Left lung (tissue), 14 donors: ENCODE measurements at regions of chr5 and their contacts with region 1.

Region 1: GRCh38 chr5:36944607-36945225 is 68.1 kb downstream of the NIPBL start:
- DNase-seq: peak in 2 of 4 donors; percentile 38 to 51
- ATAC-seq: peak; percentile 29
- H3K4me3 ChIP-seq: no peak overlapping the region
- H3K27ac ChIP-seq: no peak overlapping the region
- H3K4me1 ChIP-seq: peaks cover 7 to 48% of the 10 kb centered on the region in 2 donors
- H3K27me3 ChIP-seq: no peaks in the 10 kb centered on the region
- CTCF ChIP-seq: peak; percentile 54 to 60

Region 2: DNA sequence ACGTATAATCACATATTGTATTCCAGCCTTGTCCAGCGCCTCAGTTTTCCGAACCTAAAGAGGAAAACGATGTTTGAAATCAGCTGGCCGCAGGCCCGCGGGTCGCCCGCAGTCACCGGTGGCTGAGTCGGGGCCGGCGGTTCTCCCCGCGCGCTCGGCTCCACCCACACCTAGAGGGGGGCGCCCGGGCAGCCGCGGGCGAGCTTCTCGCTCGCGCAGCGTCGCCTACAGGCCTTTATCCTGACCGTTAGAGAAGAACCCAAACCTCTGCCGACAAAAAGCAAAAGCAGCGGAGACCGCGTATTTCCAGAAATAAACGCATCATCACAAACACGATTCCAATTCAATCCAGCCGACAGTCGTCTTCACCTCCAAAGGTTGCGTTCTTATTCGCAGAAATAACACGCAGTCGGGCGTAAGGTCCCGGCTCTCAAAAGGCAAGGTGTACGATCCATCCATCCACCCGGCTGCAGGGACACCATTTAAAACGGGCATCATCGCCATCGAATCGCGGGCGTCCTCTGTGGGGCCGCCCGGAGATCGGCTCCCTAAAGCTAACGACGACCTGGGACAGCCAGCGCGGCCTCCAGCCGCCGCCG is 68.8 kb before region 1 on chr5:
- intact Hi-C with region 1: loop called in 1 of 2 experiments (anchors 10 kb)
- DNase-seq: peak; percentile 81 to 97 (median 88)
- ATAC-seq: peak; percentile 88
- H3K4me3 ChIP-seq: peak overlapping the region; percentile 72 to 76
- H3K27ac ChIP-seq: peak overlapping the region; percentile 97 to 98
- H3K4me1 ChIP-seq: peaks cover 23 to 45% of the 10 kb centered on the region in 2 donors
- H3K27me3 ChIP-seq: no peaks in the 10 kb centered on the region
- CTCF ChIP-seq: peak in 1 of 2 donors; percentile 33